Activated B cell treated with CpG ODN at 0.5 μM for 24 hours (primary cell): ENCODE measurements at regions of chr4 and their contacts with region 1.

Region 1: GRCh38 chr4:18021722-18022571 is at the start of gene LCORL:
- DNase-seq: peak; percentile 91
- ATAC-seq: peak; percentile 81
- H3K4me3 Mint-ChIP-seq: peak within 1 kb of the TSS; percentile 97
- H3K27ac Mint-ChIP-seq: peak within 1 kb of the TSS; percentile 92
- H3K4me1 Mint-ChIP-seq: peaks cover 19% of the 10 kb centered on the region
- H3K27me3 Mint-ChIP-seq: no peaks in the 10 kb centered on the region
- CTCF ChIP-seq: no peak
- total RNA-seq, gene LCORL: 11.9 and 12.6 TPM in 2 replicates

Region 2: DNA sequence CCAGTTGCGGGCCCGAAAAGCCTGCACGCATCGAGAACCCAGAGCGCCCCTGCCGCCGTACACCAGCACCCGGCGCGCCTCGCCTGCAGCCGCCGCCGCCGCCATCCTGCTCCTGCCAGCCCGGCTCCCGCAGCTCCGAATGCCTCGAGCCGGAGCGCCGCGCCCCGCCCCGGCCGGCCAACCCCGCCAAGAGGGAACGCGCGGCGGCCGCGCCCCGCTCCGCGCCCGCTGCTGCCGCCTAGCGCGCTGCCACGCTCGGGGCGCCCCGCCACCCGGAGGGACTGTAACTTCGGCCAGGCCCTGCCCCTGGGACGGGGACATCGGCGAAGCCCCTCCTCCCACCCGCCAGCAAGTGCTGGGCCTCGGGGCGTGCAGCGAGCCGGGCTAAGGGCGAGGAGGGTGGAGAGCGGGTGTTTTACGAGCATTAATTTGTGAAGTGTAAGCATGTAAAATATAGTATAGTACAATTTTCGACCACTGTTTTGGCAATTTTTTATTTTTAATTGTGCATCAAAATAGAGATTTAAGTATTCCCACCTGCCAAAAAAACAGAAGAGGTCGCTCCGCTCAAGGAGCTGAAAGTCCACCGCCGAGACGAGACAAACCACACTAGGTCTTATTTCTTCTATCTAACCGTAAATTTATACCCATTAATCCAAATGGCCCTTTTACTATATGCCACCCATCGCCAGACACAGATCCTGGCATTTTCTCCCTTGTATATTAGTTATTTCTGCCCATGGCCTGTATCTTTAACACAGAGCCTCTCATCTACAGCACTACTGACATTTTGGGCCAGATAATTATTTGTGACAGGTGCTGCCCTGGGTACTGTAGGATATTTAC is 509.8 kb before region 1 on chr4 and contains the start of gene QDPR:
- CTCF ChIA-PET with region 1: no interaction called
- POLR2A ChIA-PET with region 1: no interaction called
- intact Hi-C with region 1: loop called (anchors 2 kb)
- DNase-seq: peak; percentile 60
- ATAC-seq: peak; percentile 90
- H3K4me3 Mint-ChIP-seq: peak within 1 kb of the TSS; percentile 95
- H3K27ac Mint-ChIP-seq: peak within 1 kb of the TSS; percentile 62
- H3K4me1 Mint-ChIP-seq: peaks cover 19% of the 10 kb centered on the region
- H3K27me3 Mint-ChIP-seq: peaks cover 9% of the 10 kb centered on the region
- CTCF ChIP-seq: no peak
- total RNA-seq, gene QDPR: 7.2 and 8.9 TPM in 2 replicates

Region 3: GRCh38 chr4:17544205-17544604 is 477.7 kb before region 1 on chr4:
- CTCF ChIA-PET with region 1: no interaction called
- POLR2A ChIA-PET with region 1: no interaction called
- intact Hi-C with region 1: loop called (anchors 1 kb)
- DNase-seq: no peak
- ATAC-seq: no peak
- H3K4me3 Mint-ChIP-seq: no peak overlapping the region
- H3K27ac Mint-ChIP-seq: no peak overlapping the region
- H3K4me1 Mint-ChIP-seq: peaks cover 3% of the 10 kb centered on the region
- H3K27me3 Mint-ChIP-seq: peaks cover 9% of the 10 kb centered on the region
- CTCF ChIP-seq: no peak

Region 4: GRCh38 chr4:17597517-17597916 is 424.4 kb before region 1 on chr4:
- CTCF ChIA-PET with region 1: no interaction called
- POLR2A ChIA-PET with region 1: no interaction called
- intact Hi-C with region 1: loop called (anchors 5 kb)
- DNase-seq: no peak
- ATAC-seq: no peak
- H3K4me3 Mint-ChIP-seq: no peak overlapping the region
- H3K27ac Mint-ChIP-seq: no peak overlapping the region
- H3K4me1 Mint-ChIP-seq: peaks cover 32% of the 10 kb centered on the region
- H3K27me3 Mint-ChIP-seq: no peaks in the 10 kb centered on the region
- CTCF ChIP-seq: no peak

Region 5: GRCh38 chr4:17614416-17615299 is 407.3 kb before region 1 on chr4 and contains the start of gene MED28:
- CTCF ChIA-PET with region 1: no interaction called
- POLR2A ChIA-PET with region 1: no interaction called
- intact Hi-C with region 1: loop called (anchors 1 kb)
- DNase-seq: peak; percentile 89
- ATAC-seq: peak; percentile 86
- H3K4me3 Mint-ChIP-seq: peak within 1 kb of the TSS; percentile 97
- H3K27ac Mint-ChIP-seq: peak within 1 kb of the TSS; percentile 95
- H3K4me1 Mint-ChIP-seq: peaks cover 45% of the 10 kb centered on the region
- H3K27me3 Mint-ChIP-seq: no peaks in the 10 kb centered on the region
- CTCF ChIP-seq: no peak
- total RNA-seq, gene MED28: 71.9 and 74.6 TPM in 2 replicates

Region 6: DNA sequence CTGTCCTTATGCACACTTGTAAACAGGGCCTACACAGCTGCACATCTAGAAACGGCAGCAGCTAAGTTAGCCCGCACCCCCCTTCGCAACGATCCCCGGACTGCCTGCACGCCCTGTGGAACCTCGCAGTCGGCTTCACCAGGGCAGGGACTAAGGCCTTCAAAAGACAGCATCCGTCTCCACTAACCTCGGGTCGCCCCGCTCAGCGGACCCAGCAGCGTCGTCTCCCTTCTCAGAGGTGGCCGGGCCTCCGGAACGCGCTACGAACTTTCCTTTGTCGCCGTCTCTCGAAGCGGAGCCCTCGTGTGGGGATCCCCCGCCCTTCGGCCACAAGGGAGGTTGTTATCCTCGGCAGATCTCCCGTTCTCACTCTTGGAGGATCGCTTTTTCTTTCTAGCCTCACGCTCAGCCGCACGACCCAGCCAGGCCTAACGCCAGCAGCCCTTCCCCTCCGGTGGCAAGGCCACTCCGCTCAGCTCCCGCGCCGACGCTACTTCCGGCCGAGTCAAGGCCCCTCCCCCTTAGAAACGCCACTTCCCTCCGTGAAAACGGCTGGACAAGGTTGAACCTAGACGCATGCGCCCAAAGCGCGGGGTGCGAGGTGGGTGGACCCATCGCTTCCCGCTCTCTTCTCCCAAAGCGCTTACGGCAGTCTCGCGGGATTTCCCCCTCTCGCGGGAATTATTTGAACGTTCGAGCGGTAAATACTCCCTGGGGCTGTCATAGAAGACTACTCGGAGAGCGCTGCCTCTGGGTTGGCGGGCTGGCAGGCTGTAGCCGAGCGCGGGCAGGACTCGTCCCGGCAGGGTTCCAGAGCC is 211.5 kb before region 1 on chr4 and contains the starts of genes DCAF16 and NCAPG:
- CTCF ChIA-PET with region 1: no interaction called
- POLR2A ChIA-PET with region 1: interaction called, 5 read pairs
- intact Hi-C with region 1: loop called (anchors 1 kb)
- DNase-seq: peak; percentile 98
- ATAC-seq: peak; percentile 93
- H3K4me3 Mint-ChIP-seq: peak within 1 kb of the TSS; percentile 96
- H3K27ac Mint-ChIP-seq: peak within 1 kb of the TSS; percentile 96
- H3K4me1 Mint-ChIP-seq: peaks cover 57% of the 10 kb centered on the region
- H3K27me3 Mint-ChIP-seq: no peaks in the 10 kb centered on the region
- CTCF ChIP-seq: no peak
- total RNA-seq, gene DCAF16: 42.9 and 57.2 TPM in 2 replicates
- total RNA-seq, gene NCAPG: 1.1 and 1.5 TPM in 2 replicates

Region 7: GRCh38 chr4:17997129-17997528 is 24.8 kb before region 1 on chr4:
- CTCF ChIA-PET with region 1: no interaction called
- POLR2A ChIA-PET with region 1: no interaction called
- intact Hi-C with region 1: no loop called
- DNase-seq: no peak
- ATAC-seq: no peak
- H3K4me3 Mint-ChIP-seq: no peak overlapping the region
- H3K27ac Mint-ChIP-seq: no peak overlapping the region
- H3K4me1 Mint-ChIP-seq: peaks cover 26% of the 10 kb centered on the region
- H3K27me3 Mint-ChIP-seq: no peaks in the 10 kb centered on the region
- CTCF ChIP-seq: no peak

Region 8: GRCh38 chr4:18057821-18058533 is 36.0 kb after region 1 on chr4:
- CTCF ChIA-PET with region 1: no interaction called
- POLR2A ChIA-PET with region 1: interaction called, 3 read pairs
- intact Hi-C with region 1: loop called (anchors 1 kb)
- DNase-seq: no peak
- ATAC-seq: no peak
- H3K4me3 Mint-ChIP-seq: peak overlapping the region; percentile 12
- H3K27ac Mint-ChIP-seq: no peak overlapping the region
- H3K4me1 Mint-ChIP-seq: peaks cover 13% of the 10 kb centered on the region
- H3K27me3 Mint-ChIP-seq: peaks cover 2% of the 10 kb centered on the region
- CTCF ChIP-seq: no peak